Calu3 (cell line): ENCODE measurements at regions of chr17 and their contacts with region 1.

Region 1: DNA sequence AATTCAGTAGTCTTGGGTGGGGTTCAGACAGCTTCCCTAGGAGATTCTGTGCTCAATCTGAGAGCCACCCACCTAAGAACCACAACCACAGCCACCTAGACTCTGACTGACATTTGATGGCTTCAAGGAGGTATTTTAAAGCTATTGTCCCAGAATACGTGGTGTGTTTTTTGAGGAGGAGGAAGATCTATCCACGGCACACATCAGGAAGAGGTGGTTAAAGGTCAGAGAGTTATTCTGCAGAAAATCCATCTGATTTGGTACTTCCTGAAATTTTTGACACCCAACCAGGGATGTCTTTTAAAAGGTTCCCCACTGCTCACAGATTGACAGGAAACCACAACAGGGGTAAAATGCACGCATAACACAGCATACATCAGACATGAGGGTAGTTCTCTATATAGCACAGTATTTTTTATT is 25.1 kb downstream of the SMARCE1 start:
- DNase-seq: peak; percentile 3
- H3K4me3 Mint-ChIP-seq: no peak overlapping the region
- H3K27ac Mint-ChIP-seq: no peak overlapping the region
- H3K4me1 Mint-ChIP-seq: peaks cover 14% of the 10 kb centered on the region
- H3K27me3 Mint-ChIP-seq: peaks cover 56% of the 10 kb centered on the region
- CTCF ChIP-seq: no peak

Region 2: DNA sequence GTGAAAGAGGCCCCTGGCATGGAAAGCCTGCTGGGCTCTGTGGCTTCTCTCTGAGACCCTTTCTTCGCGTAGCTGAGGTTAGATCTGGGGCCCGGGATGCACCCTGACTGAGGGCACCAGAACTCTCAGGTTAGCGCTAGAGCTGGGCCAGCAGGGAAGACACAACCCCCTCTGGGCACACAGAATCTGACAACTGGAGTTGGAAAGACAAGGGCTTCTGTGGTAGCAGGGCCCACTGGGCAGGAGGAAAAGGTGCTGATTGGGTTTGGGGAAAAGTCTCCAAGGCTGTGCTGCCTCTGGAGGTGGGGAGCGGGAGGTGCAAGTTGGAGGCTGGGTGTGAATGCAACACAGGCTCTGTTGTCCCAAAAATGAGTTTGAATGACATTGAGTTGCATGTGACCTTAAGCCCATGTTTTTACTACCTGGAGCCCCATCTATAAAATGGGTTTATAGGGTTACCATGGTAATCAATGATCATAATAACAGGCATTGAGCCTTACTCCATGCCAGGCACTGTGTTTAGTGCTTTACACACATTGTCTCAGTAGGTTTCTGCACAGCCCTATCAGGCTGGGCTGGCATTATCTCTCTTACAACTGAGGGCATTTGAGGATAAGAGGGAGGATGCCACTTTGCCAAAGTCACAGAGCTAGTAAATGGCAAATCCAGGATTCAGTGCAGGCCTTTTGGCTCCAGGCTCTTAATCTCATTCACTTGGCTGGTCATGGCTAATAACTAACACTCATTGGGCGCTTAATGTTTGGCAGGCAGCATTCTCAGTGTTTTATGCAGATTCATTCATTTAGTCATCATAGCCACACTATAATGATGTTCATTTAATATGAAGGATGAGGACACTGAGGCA is 188.7 kb before region 1 on chr17:
- CTCF ChIA-PET with region 1: no interaction called
- intact Hi-C with region 1: no loop called
- DNase-seq: peak; percentile 94
- H3K4me3 Mint-ChIP-seq: no peak overlapping the region
- H3K27ac Mint-ChIP-seq: no peak overlapping the region
- H3K4me1 Mint-ChIP-seq: no peaks in the 10 kb centered on the region
- H3K27me3 Mint-ChIP-seq: peaks cover 43% of the 10 kb centered on the region
- CTCF ChIP-seq: no peak

Region 3: GRCh38 chr17:40531051-40531991 is 91.2 kb before region 1 on chr17:
- CTCF ChIA-PET with region 1: interaction called, 105 read pairs
- intact Hi-C with region 1: no loop called
- DNase-seq: no peak
- H3K4me3 Mint-ChIP-seq: no peak overlapping the region
- H3K27ac Mint-ChIP-seq: no peak overlapping the region
- H3K4me1 Mint-ChIP-seq: peaks cover 19% of the 10 kb centered on the region
- H3K27me3 Mint-ChIP-seq: peaks cover 48% of the 10 kb centered on the region
- CTCF ChIP-seq: no peak

Region 4: GRCh38 chr17:40647624-40648383 is 25.3 kb after region 1 on chr17 and contains the start of gene SMARCE1:
- CTCF ChIA-PET with region 1: interaction called, 217 read pairs
- intact Hi-C with region 1: loop called (anchors 1 kb)
- DNase-seq: peak; percentile 98
- H3K4me3 Mint-ChIP-seq: peak within 1 kb of the TSS; percentile 74
- H3K27ac Mint-ChIP-seq: peak within 1 kb of the TSS; percentile 87
- H3K4me1 Mint-ChIP-seq: peaks cover 29% of the 10 kb centered on the region
- H3K27me3 Mint-ChIP-seq: no peaks in the 10 kb centered on the region
- CTCF ChIP-seq: no peak
- total RNA-seq, gene SMARCE1: 755 and 768 TPM in 2 replicates

Region 5: DNA sequence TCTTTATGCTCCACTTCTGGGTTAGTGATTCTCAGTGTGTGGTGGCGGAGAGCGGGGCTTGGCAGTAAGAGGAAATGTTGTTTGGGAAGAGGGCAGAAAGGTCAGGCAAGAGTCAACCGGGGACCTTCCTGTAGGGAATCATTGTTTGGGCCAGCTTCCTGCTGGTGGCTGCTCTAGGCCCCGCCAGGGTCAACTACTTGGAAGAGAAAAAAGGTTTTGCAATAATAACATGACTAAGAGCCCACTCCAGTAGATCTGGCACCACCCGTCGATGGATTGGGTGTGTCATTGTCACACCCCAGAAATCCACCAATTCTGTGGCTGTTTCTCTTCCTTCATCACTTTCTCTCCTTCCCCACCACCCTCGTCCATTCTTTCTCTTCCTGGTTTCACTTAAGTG is 85.2 kb after region 1 on chr17:
- CTCF ChIA-PET with region 1: interaction called, 19 read pairs
- intact Hi-C with region 1: no loop called
- DNase-seq: peak; percentile 92
- H3K4me3 Mint-ChIP-seq: no peak overlapping the region
- H3K27ac Mint-ChIP-seq: peak overlapping the region; percentile 14
- H3K4me1 Mint-ChIP-seq: peaks cover 36% of the 10 kb centered on the region
- H3K27me3 Mint-ChIP-seq: peaks cover 14% of the 10 kb centered on the region
- CTCF ChIP-seq: no peak

Region 6: GRCh38 chr17:40750391-40750790 is 127.9 kb after region 1 on chr17:
- CTCF ChIA-PET with region 1: interaction called, 12 read pairs
- intact Hi-C with region 1: no loop called
- DNase-seq: no peak
- H3K4me3 Mint-ChIP-seq: no peak overlapping the region
- H3K27ac Mint-ChIP-seq: no peak overlapping the region
- H3K4me1 Mint-ChIP-seq: no peaks in the 10 kb centered on the region
- H3K27me3 Mint-ChIP-seq: peaks cover 77% of the 10 kb centered on the region
- CTCF ChIP-seq: no peak

Region 7: DNA sequence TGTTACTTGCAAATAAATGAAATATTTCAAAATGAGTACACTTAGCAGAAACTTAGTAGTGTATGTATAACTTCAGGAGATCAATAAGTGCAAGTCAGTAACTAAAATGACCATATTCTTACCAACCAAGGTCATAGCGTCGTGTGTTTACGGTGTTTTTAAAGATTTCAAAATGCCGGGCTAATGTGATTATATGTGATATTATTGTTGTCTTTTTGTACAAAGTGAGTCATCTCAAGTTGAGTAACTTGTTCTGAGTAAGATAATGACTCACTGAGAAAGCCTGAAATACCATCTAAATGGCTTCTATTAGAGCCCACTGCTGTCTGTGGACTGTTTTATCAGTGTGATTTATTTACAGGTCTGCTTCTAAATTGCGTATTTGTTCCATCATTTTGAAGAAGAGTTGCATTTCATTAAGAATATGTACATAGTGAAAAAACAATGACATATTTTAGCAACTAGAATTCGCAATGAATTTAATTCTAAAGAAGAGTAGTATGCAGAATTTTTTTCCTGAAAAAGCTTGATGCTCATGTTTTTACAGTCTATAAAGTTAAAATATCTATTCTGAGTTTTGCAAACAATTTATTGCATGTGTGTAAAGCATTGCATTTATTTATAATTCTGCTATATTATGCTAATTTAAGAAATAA is 231.8 kb after region 1 on chr17:
- CTCF ChIA-PET with region 1: interaction called, 19 read pairs
- intact Hi-C with region 1: loop called (anchors 2 kb)
- DNase-seq: no peak
- H3K4me3 Mint-ChIP-seq: peak overlapping the region; percentile 33
- H3K27ac Mint-ChIP-seq: peak overlapping the region; percentile 86
- H3K4me1 Mint-ChIP-seq: peaks cover 85% of the 10 kb centered on the region
- H3K27me3 Mint-ChIP-seq: no peaks in the 10 kb centered on the region
- CTCF ChIP-seq: no peak